Testis (tissue), 5 donors: ENCODE measurements at regions of chr10 and their contacts with region 1.

Region 1: GRCh38 chr10:110279407-110279986 is 25.2 kb downstream of the SMNDC1 start:
- DNase-seq: peak; percentile 78
- H3K4me3 ChIP-seq: no peak overlapping the region
- H3K27ac ChIP-seq: no peak overlapping the region
- H3K4me1 ChIP-seq: peaks cover 12% of the 10 kb centered on the region
- H3K27me3 ChIP-seq: no peaks in the 10 kb centered on the region
- CTCF ChIP-seq: peak; percentile 69 to 90 (median 87)
- POLR2A ChIP-seq: no peak

Region 2: GRCh38 chr10:110137142-110137545 is 142.4 kb before region 1 on chr10:
- intact Hi-C with region 1: loop called (anchors 5 kb)
- DNase-seq: no peak
- H3K4me3 ChIP-seq: no peak overlapping the region
- H3K27ac ChIP-seq: peak overlapping the region in 1 of 2 donors; percentile 29
- H3K4me1 ChIP-seq: peaks cover 5% of the 10 kb centered on the region
- H3K27me3 ChIP-seq: no peaks in the 10 kb centered on the region
- CTCF ChIP-seq: peak; percentile 89 to 97 (median 91)
- POLR2A ChIP-seq: no peak

Region 3: DNA sequence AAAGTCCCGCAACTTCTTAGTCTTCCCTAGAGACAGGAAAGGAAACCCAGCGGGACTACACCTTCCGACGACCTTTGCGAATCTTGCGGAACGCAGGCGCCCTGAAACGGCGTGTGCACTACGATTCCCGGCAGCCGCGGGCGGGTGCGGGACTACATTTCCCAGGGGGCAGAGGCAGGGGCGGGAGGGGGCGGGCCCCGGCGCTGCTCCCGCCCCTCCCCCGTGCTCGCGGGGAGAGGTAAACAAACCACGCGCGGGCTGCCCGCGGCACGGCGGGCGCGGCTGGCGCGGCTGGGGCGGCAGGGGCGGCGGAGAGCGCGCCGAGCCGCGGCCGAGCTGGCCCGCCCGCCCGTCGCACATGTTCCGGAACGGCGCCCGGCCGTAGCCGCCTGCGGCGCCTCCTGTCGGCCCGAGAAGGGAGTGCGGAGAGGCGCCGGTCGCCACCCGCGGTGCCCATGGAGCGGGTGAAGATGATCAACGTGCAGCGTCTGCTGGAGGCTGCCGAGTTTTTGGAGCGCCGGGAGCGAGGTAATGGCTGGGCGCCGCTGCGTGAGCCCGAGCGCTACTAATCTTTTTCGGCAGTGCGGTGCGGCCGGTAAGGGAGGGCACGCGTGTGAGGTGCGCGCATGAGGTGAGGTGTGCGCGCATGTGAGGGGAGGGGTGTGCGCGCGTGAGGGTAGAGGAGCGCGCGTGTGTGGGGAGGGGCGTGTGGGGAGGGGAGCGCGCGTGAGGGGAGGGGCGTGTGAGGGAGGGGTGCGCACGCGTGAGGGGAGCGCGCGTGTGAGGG is 53.5 kb before region 1 on chr10:
- intact Hi-C with region 1: loop called (anchors 10 kb)
- DNase-seq: peak; percentile 94
- H3K4me3 ChIP-seq: peak overlapping the region; percentile 76 to 87
- H3K27ac ChIP-seq: peak overlapping the region; percentile 91 to 97
- H3K4me1 ChIP-seq: peaks cover 13% of the 10 kb centered on the region
- H3K27me3 ChIP-seq: no peaks in the 10 kb centered on the region
- CTCF ChIP-seq: peak; percentile 55 to 84 (median 73)
- POLR2A ChIP-seq: no peak